ENCODE measurements at regions of chr1 and their contacts with region 1.

Region 1: GRCh38 chr1:201408176-201408833 is 9.2 kb upstream of the LAD1 start:
- DNase-seq: peak; percentile 81
- ATAC-seq: peak; percentile 77
- H3K4me3 Mint-ChIP-seq: no peak overlapping the region
- H3K27ac Mint-ChIP-seq: no peak overlapping the region
- H3K4me1 Mint-ChIP-seq: no peaks in the 10 kb centered on the region
- H3K27me3 Mint-ChIP-seq: no peaks in the 10 kb centered on the region

Region 2: DNA sequence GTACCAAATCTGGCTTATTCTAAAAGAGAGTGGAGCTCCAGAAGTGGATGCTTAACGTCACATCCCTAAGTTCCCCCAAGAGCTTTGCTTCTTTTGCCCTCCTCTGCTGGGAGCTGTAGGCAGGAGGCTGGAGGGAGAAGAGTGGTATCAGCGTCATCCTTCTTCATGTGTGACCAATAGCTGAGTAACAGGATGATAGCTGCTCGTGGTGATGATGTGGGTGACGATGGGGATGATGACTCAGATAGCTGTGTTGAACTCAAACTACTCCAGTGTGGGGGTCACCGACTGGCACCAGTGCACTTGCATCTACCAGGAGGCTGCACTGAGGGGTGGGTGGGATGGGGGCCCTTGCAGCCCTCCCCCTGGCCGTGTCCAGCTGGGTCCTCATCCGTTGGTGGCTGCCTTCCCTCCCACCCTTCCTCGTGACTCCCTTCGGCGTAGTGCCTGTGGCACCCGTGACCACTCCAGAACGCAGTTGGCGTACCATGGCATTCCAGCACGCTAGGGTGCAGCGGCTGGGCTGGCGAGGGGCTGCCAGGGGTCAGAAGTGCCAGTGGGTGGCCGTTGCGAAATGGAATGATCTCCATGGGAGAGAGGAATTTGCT is 216.5 kb before region 1 on chr1:
- CTCF ChIA-PET with region 1: no interaction called
- POLR2A ChIA-PET with region 1: no interaction called
- DNase-seq: peak; percentile 24
- ATAC-seq: peak; percentile 30
- H3K4me3 Mint-ChIP-seq: no peak overlapping the region
- H3K27ac Mint-ChIP-seq: no peak overlapping the region
- H3K4me1 Mint-ChIP-seq: peaks cover 2% of the 10 kb centered on the region
- H3K27me3 Mint-ChIP-seq: peaks cover 18% of the 10 kb centered on the region

Region 3: DNA sequence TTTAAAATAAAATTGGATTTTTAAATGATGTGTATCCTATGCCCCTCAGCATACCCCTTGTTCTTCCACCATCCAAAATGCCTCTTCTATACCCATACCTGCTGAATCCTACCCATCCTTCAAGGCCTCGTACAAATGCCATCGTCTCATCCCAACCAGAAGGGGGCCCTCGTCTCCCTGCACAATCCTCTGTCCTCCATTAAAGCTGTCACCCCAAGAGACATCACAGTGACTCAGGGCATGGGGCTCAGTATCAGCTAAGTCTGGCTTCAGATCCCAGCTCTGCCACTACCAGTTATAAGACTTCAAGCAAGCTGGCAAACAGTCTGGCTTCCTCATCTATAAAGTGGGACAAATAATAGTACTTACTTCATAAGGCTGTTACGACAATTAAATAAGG is 193.8 kb before region 1 on chr1:
- CTCF ChIA-PET with region 1: no interaction called
- POLR2A ChIA-PET with region 1: no interaction called
- DNase-seq: no peak
- ATAC-seq: no peak
- H3K4me3 Mint-ChIP-seq: no peak overlapping the region
- H3K27ac Mint-ChIP-seq: no peak overlapping the region
- H3K4me1 Mint-ChIP-seq: no peaks in the 10 kb centered on the region
- H3K27me3 Mint-ChIP-seq: peaks cover 9% of the 10 kb centered on the region

Region 4: GRCh38 chr1:201419746-201420607 is 11.7 kb after region 1 on chr1:
- CTCF ChIA-PET with region 1: no interaction called
- POLR2A ChIA-PET with region 1: no interaction called
- DNase-seq: no peak
- ATAC-seq: no peak
- H3K4me3 Mint-ChIP-seq: no peak overlapping the region
- H3K27ac Mint-ChIP-seq: no peak overlapping the region
- H3K4me1 Mint-ChIP-seq: no peaks in the 10 kb centered on the region
- H3K27me3 Mint-ChIP-seq: peaks cover 24% of the 10 kb centered on the region

Region 5: DNA sequence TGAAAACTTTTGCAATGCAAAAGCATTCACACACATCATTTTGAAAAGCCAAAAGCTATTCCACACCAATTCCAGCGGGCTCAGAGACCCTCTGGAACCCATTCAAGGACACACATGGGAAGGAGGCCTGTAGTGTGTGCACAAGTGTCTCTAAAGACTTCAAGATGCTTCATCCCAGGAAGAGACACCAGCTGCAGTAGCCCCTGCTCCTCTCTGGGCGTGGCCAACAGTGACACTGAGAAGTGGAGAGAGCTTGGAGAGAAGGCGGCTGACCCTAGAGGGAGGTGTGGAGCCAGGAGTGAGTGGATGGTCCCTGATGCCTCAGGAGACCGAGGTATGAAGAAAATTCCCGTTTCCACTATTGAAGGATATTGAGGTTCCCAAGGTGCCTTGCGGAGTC is 28.1 kb after region 1 on chr1:
- CTCF ChIA-PET with region 1: interaction called, 14 read pairs
- POLR2A ChIA-PET with region 1: no interaction called
- DNase-seq: no peak
- ATAC-seq: no peak
- H3K4me3 Mint-ChIP-seq: no peak overlapping the region
- H3K27ac Mint-ChIP-seq: no peak overlapping the region
- H3K4me1 Mint-ChIP-seq: peaks cover 5% of the 10 kb centered on the region
- H3K27me3 Mint-ChIP-seq: peaks cover 23% of the 10 kb centered on the region

Region 6: DNA sequence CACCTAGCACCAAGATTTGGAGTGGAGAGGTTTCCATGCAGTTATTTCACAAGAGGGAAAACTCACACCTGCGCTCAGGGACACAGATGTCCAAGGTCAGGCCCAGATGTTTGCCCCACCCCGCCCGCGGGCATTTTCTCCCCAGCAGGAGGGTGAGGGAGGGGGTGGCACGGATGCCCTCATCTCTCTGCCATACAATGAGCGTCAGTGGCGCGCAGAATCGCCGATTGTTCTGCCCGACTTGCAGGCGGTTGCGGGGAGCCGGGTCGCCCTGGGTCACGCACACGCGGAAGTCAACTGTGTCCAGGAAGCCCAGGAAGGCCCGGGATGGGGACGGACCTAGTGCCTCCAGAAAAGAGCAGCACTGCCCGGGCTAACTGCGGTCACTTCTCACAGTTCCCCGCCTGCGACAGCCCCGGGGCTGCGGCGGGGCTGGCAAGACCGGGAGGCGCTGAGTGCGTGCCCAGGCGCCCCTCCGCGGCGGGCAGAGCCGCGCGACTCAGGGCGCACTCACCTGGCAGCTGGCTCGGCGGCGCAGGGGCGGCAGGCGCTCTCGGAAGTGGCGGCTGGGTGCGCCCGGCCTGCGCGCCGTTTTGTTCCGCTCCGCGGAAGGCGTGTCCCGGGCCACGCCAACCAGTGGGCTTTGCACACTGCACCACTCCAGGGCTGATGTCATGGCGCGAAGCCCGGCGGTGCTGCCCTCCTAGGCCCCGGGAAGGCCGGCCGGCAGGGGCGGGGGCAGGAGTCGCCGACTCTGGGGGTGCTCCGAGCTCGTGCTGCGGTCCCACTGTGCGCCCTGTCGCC is 98.5 kb after region 1 on chr1 and contains the start of gene CSRP1:
- CTCF ChIA-PET with region 1: no interaction called
- POLR2A ChIA-PET with region 1: no interaction called
- DNase-seq: peak; percentile 89
- ATAC-seq: peak; percentile 96
- H3K4me3 Mint-ChIP-seq: peak within 1 kb of the TSS; percentile 90
- H3K27ac Mint-ChIP-seq: peak within 1 kb of the TSS; percentile 93
- H3K4me1 Mint-ChIP-seq: peaks cover 59% of the 10 kb centered on the region
- H3K27me3 Mint-ChIP-seq: no peaks in the 10 kb centered on the region
- total RNA-seq, gene CSRP1: 78.7 to 80.9 TPM